A673 (cell line): ENCODE measurements at regions of chr9 and their contacts with region 1.

Region 1: DNA sequence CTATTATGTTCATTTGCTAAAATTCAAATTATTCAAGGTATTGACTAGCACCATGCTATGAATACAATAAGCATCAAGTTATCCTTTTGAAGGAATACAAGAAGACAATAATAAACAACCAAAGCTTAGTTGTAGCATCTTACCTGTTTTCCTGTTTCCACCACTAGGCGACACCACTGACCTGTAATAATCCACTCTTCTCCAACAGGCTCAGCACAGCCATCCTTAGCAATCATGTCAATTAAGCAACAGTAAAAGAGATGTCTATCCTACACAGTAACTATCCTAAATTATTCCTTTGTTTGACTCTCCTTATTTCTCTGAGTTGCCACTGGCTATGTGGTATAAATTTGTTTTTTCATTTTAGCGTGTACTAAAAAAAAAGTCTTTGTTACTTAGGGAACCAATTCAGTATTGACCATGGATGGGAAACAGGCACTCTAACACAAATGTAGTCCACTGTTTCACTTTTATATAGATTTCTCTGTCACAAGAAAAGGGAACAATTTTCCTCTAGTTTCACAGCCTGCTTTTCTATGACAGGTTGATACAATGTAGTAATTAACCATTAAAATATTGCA is 46.2 kb downstream of the PCA3 start:
- DNase-seq: peak; percentile 52
- H3K4me3 ChIP-seq: no peak overlapping the region
- H3K27ac ChIP-seq: no peak overlapping the region
- H3K4me1 ChIP-seq: no peaks in the 10 kb centered on the region
- H3K27me3 ChIP-seq: peaks cover 25% of the 10 kb centered on the region
- CTCF ChIP-seq: peak; percentile 72

Region 2: DNA sequence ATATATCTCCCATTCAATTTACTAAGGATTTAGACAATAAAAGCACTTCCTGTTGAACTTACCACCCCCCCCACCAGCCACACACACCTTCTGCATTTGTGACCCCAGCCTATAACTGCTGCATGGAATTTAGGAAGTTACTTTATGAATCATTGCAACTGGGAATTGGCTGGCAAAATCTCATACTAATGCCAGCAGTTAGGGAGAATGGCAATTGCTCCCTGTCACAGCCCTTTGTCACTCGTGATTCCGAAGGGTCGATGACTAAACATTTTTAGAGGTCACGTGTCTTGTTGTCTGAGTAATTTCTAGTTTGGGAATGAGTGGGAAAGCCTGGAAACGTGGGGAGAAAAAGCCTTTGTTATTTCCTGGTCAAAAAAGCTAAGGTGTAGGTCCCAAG is 92.9 kb before region 1 on chr9:
- CTCF ChIA-PET with region 1: no interaction called
- POLR2A ChIA-PET with region 1: no interaction called
- intact Hi-C with region 1: no loop called
- DNase-seq: no peak
- H3K4me3 ChIP-seq: no peak overlapping the region
- H3K27ac ChIP-seq: no peak overlapping the region
- H3K4me1 ChIP-seq: no peaks in the 10 kb centered on the region
- H3K27me3 ChIP-seq: peaks cover 17% of the 10 kb centered on the region
- CTCF ChIP-seq: no peak

Region 3: DNA sequence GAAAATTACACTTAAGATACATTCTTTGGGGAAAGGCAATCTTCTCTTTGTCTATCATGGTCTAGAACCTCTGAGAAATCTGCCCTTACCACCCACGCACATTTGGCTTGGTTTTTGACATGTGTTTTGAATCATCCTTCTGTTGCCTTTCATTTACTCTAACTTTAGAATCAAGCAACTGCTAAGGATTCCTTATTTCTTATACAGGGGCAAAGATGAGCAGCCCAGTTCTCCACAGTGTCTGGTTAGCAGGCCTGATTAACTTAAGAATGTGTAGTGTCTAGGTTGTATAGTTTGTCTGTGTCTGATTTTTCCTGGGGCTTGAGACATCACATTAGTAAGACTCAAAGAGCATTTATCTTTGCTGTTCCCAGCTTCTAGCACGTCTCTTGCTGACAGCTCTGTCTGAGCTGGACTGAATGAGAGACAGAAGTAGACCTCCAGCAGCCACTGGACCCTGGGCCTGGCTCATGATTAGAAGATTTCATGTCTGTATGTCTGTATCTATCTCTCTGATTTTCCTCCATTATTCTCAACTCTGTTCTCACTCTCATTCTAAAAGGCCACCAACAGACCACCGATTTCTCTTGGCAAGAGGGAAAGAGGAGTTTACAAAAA is 78.0 kb before region 1 on chr9:
- CTCF ChIA-PET with region 1: no interaction called
- POLR2A ChIA-PET with region 1: no interaction called
- intact Hi-C with region 1: no loop called
- DNase-seq: no peak
- H3K4me3 ChIP-seq: no peak overlapping the region
- H3K27ac ChIP-seq: no peak overlapping the region
- H3K4me1 ChIP-seq: no peaks in the 10 kb centered on the region
- H3K27me3 ChIP-seq: peaks cover 25% of the 10 kb centered on the region
- CTCF ChIP-seq: no peak

Region 4: GRCh38 chr9:76744336-76744735 is 66.1 kb before region 1 on chr9:
- CTCF ChIA-PET with region 1: no interaction called
- POLR2A ChIA-PET with region 1: no interaction called
- intact Hi-C with region 1: no loop called
- DNase-seq: no peak
- H3K4me3 ChIP-seq: no peak overlapping the region
- H3K27ac ChIP-seq: no peak overlapping the region
- H3K4me1 ChIP-seq: no peaks in the 10 kb centered on the region
- H3K27me3 ChIP-seq: peaks cover 3% of the 10 kb centered on the region
- CTCF ChIP-seq: no peak

Region 5: GRCh38 chr9:76787677-76788076 is 22.8 kb before region 1 on chr9:
- CTCF ChIA-PET with region 1: no interaction called
- POLR2A ChIA-PET with region 1: interaction called, 18 read pairs
- intact Hi-C with region 1: no loop called
- DNase-seq: no peak
- H3K4me3 ChIP-seq: no peak overlapping the region
- H3K27ac ChIP-seq: no peak overlapping the region
- H3K4me1 ChIP-seq: no peaks in the 10 kb centered on the region
- H3K27me3 ChIP-seq: peaks cover 5% of the 10 kb centered on the region
- CTCF ChIP-seq: no peak

Region 6: DNA sequence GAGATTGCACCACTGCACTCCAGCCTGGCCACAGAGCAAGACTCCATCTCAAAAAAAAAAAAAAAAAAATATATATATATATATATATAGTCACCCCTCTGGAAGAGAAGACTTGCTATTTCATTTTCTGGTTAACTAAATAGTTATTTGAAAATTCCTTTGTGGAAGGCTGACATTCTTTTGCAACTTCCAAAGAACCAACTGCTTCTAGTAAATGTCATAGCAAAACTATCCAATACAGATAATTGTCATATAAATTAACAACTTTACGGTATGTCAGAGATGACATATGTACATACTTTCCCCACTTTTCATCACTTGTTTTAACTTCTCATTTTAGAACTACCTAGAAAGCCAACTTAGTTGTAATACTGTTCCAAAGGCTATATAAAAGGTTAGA is 44.5 kb after region 1 on chr9:
- CTCF ChIA-PET with region 1: no interaction called
- POLR2A ChIA-PET with region 1: no interaction called
- intact Hi-C with region 1: no loop called
- DNase-seq: no peak
- H3K4me3 ChIP-seq: no peak overlapping the region
- H3K27ac ChIP-seq: no peak overlapping the region
- H3K4me1 ChIP-seq: no peaks in the 10 kb centered on the region
- H3K27me3 ChIP-seq: no peaks in the 10 kb centered on the region
- CTCF ChIP-seq: no peak

Region 7: GRCh38 chr9:76916231-76916630 is 105.8 kb after region 1 on chr9:
- CTCF ChIA-PET with region 1: no interaction called
- POLR2A ChIA-PET with region 1: no interaction called
- intact Hi-C with region 1: loop called (anchors 5 kb)
- DNase-seq: no peak
- H3K4me3 ChIP-seq: no peak overlapping the region
- H3K27ac ChIP-seq: no peak overlapping the region
- H3K4me1 ChIP-seq: no peaks in the 10 kb centered on the region
- H3K27me3 ChIP-seq: peaks cover 79% of the 10 kb centered on the region
- CTCF ChIP-seq: no peak

Region 8: GRCh38 chr9:76987594-76988200 is 177.2 kb after region 1 on chr9:
- CTCF ChIA-PET with region 1: interaction called, 7 read pairs
- POLR2A ChIA-PET with region 1: no interaction called
- intact Hi-C with region 1: loop called (anchors 1 kb)
- DNase-seq: peak; percentile 33
- H3K4me3 ChIP-seq: no peak overlapping the region
- H3K27ac ChIP-seq: no peak overlapping the region
- H3K4me1 ChIP-seq: no peaks in the 10 kb centered on the region
- H3K27me3 ChIP-seq: peaks cover 24% of the 10 kb centered on the region
- CTCF ChIP-seq: peak; percentile 50

Region 9: DNA sequence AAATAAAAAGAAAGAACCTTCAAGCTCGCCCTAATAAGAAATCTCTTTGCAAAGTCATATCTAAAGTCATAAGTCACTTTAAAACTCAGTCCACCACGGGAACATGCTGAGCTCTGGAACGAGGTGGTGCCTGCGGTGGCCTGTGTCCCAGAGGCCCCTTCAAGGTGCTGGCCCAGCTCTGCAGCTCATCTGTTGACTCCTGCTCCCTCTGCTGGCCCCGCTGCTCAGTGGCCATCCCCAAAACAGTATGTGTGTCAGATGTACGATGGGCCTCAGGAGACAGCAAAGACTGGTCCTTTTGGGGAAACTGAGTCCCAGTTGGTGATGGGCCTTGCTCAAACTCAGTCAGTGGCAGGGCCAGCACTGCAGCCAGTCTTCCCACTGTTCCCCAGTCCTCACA is 186.2 kb after region 1 on chr9:
- CTCF ChIA-PET with region 1: interaction called, 10 read pairs
- POLR2A ChIA-PET with region 1: no interaction called
- intact Hi-C with region 1: no loop called
- DNase-seq: peak; percentile 27
- H3K4me3 ChIP-seq: no peak overlapping the region
- H3K27ac ChIP-seq: no peak overlapping the region
- H3K4me1 ChIP-seq: no peaks in the 10 kb centered on the region
- H3K27me3 ChIP-seq: peaks cover 3% of the 10 kb centered on the region
- CTCF ChIP-seq: peak; percentile 58

Region 10: DNA sequence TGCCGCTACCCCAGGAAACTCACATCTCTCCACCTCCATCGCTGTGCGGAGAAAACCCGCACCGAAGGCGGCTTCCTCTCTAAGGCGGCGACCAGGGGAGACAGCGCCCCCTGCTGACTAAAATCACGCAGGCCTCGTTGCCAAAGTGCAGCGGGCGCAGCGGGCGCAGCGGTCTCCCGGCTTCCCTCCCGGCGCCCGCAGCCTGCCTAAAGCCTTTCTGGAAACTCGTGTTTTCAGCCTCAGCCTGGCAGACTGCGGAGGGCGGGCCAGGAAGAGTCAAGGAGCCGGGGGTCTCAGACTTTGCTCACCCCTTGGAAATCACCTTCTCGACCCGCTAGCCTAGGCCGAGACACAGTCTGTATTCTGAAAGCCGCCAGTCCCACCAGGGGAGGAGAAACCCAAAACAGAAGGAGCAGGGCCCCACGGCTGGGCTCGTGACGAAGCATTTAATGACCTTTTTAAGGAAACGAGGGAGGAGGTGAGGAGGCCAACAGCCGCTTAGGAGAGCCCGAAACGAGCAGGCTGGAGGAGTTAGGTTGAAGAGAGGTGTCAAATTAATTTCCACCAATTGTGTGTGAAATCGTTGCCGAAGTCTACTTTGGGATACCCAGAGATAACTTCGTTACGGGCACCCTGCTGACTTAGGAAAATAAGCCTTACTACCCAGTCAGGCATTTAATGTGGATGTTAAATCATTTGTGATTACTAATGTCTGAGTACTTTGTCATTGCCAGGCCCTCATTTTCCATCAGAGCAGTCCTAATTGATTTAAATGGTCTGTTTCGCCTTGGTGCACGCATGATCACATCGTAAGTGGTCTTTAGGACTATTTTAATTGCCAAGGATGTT is 201.7 kb after region 1 on chr9:
- CTCF ChIA-PET with region 1: no interaction called
- POLR2A ChIA-PET with region 1: no interaction called
- intact Hi-C with region 1: loop called (anchors 5 kb)
- DNase-seq: peak; percentile 81
- H3K4me3 ChIP-seq: peak overlapping the region; percentile 30
- H3K27ac ChIP-seq: no peak overlapping the region
- H3K4me1 ChIP-seq: peaks cover 5% of the 10 kb centered on the region
- H3K27me3 ChIP-seq: peaks cover 88% of the 10 kb centered on the region
- CTCF ChIP-seq: peak; percentile 97

Region 11: DNA sequence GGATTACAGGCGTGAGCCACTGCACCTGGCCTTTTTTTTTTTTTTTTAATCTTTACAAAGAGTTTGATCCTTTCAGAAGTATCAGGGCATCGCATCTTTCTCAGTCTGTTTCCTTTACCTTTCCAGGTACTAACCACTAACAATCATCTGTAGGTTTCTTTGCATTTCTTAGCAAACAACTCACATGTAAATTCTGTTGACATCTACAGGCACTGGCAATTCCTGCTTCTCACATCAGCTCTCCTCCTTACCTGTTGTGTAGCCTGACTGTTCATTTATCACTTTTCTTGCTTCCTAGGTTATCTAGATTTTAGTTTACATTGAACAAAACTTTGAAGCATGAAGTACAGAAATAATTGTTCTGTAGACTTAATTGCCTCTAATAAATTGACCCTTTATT is 339.4 kb after region 1 on chr9:
- CTCF ChIA-PET with region 1: interaction called, 9 read pairs
- POLR2A ChIA-PET with region 1: no interaction called
- intact Hi-C with region 1: loop called (anchors 1 kb)
- DNase-seq: no peak
- H3K4me3 ChIP-seq: no peak overlapping the region
- H3K27ac ChIP-seq: no peak overlapping the region
- H3K4me1 ChIP-seq: no peaks in the 10 kb centered on the region
- H3K27me3 ChIP-seq: peaks cover 37% of the 10 kb centered on the region
- CTCF ChIP-seq: no peak